IMR-90 (cell line): ENCODE measurements at regions of chr1 and their contacts with region 1.

Region 1: DNA sequence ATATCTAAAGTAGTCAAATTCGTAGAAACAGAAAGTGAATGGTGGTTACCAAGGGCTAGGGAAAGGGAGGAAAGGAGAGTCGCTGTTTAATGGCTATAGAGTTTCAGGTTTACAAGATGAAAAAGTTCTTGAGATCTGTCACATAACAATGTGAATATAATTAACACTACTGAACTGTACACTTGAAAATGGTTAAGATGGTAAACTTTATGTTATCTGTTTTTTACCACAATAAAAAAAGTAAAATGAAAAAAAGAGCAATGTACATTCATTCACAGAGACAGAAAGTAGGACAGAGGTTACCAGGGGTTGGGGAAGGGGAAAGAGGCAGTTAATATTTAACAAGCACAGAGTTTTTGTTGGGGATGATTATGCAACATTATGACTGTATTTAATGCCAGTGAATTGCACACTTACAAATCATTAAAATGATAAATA is 53.3 kb upstream of the SEC16B start:
- DNase-seq: no peak
- ATAC-seq: no peak
- H3K4me3 ChIP-seq: no peak overlapping the region
- H3K27ac ChIP-seq: no peak overlapping the region
- H3K4me1 ChIP-seq: no peaks in the 10 kb centered on the region
- H3K27me3 ChIP-seq: peaks cover 2% of the 10 kb centered on the region; the same call in 1 of the 2 replicates
- CTCF ChIP-seq: no peak
- POLR2A ChIP-seq: no peak
- RAD21 ChIP-seq: no peak

Region 2: DNA sequence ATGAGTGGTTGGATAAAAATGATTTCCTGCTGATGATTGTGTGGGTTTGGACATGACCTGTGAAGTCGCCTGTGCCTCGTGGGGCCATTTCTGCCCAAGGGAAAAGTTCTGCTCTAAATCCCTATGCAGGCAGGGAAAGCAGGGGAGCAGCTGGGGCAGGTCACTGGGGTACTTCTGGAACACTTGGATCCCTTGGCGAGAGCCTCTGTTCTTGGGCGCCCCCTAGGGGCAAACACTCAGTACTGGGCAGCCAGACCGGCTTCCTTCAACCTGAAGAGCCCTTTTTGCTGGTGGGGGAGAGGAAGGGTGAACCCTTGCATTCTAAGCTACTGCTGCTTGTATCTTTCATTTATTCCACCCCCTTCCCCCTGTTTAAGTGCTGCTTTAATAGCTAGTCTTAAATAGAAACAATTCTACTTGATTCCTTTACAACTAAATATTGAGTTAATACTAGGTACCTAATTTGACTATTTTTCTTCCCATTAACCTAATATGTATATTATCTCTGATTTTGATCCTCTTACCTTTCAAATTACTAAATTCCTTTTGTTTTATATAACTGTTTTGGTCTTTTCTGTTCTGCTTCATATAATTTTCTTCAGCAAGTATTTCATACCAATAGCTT is 478.6 kb after region 1 on chr1:
- CTCF ChIA-PET with region 1: no interaction called
- POLR2A ChIA-PET with region 1: no interaction called
- dilution Hi-C with region 1: no loop called
- in situ Hi-C with region 1: no loop called
- intact Hi-C with region 1: loop called (anchors 10 kb)
- DNase-seq: peak; percentile 64
- ATAC-seq: peak; percentile 97
- H3K4me3 ChIP-seq: no peak overlapping the region
- H3K27ac ChIP-seq: no peak overlapping the region
- H3K4me1 ChIP-seq: no peaks in the 10 kb centered on the region
- H3K27me3 ChIP-seq: peaks cover 5% of the 10 kb centered on the region; the same call in 1 of the 2 replicates
- CTCF ChIP-seq: peak; percentile 87
- POLR2A ChIP-seq: no peak
- RAD21 ChIP-seq: peak; percentile 71